Tibial artery (tissue), 4 donors: ENCODE measurements at regions of chr2 and their contacts with region 1.

Region 1: DNA sequence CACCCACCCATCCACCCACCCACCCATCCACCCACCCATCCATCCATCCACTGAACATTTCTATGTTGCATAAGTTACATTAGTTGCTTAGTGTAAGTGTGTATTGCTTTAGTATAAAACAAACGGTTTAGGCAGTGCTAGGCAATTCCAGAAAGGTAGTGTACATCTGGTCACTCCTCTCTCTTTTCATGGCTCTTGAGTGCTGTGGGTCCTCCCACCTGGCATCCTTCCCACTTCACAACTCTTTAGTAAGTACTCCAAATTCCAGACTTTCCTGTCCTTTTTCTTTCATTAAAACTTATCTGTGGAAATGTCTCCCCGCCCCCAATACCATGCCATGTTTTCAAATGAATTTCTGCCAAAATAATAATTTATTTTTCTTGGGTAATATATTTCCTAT is 122.5 kb downstream of the PLEKHM3 start:
- DNase-seq: no peak
- H3K4me3 ChIP-seq: no peak overlapping the region
- H3K27ac ChIP-seq: no peak overlapping the region
- H3K4me1 ChIP-seq: no peaks in the 10 kb centered on the region
- H3K27me3 ChIP-seq: no peaks in the 10 kb centered on the region
- CTCF ChIP-seq: no peak

Region 2: DNA sequence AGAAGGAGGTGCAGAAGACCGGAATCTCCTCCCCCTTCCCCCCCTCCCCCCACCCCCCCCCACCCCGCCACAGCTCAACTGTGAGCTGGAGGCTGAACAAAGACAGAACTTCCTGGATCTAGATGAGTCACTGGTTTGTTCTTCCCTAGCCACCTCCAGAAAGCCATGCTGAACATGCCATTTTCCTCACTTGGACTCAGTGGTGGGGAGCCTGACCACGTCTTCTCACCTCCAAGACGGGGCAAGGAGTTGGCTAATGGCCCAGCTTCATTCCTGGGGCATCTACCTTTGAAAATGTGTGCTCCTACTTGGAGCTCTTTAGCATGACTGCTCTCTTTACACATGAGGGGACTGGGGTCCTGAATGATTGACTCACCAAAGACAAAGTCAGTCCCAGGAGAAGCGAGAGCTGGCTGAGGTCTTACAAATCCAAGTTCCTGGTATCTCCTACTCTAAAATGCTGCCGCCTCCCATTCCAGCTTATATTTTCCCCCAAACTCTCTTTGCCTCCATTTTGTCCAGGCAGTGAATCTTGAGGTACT is 110.5 kb before region 1 on chr2:
- intact Hi-C with region 1: loop called (anchors 10 kb)
- DNase-seq: no peak
- H3K4me3 ChIP-seq: no peak overlapping the region
- H3K27ac ChIP-seq: no peak overlapping the region
- H3K4me1 ChIP-seq: peaks cover 0 to 8% (median 6%) of the 10 kb centered on the region in 4 donors
- H3K27me3 ChIP-seq: no peaks in the 10 kb centered on the region
- CTCF ChIP-seq: no peak